ENCODE measurements at regions of chr19 and their contacts with region 1.

Region 1: GRCh38 chr19:33373701-33374421 is at the start of gene CEBPG:
- DNase-seq: peak in 2 of 3 donors; percentile 46 to 49
- H3K4me3 ChIP-seq: peak within 1 kb of the TSS; percentile 73 to 96 (median 80)
- H3K4me3 Mint-ChIP-seq: peak within 1 kb of the TSS; percentile 85 to 96
- H3K27ac ChIP-seq: peak within 1 kb of the TSS; percentile 90 to 94
- H3K27ac Mint-ChIP-seq: peak within 1 kb of the TSS; percentile 89 to 98 (median 94)
- H3K4me1 ChIP-seq: peaks cover 51 to 59% of the 10 kb centered on the region in 2 donors
- H3K4me1 Mint-ChIP-seq: peaks cover 63% of the 10 kb centered on the region
- H3K27me3 ChIP-seq: no peaks in the 10 kb centered on the region
- H3K27me3 Mint-ChIP-seq: no peaks in the 10 kb centered on the region
- CTCF ChIP-seq: no peak
- polyA plus RNA-seq, gene CEBPG: 16.8 to 18.3 (median 17.8) TPM

Region 2: DNA sequence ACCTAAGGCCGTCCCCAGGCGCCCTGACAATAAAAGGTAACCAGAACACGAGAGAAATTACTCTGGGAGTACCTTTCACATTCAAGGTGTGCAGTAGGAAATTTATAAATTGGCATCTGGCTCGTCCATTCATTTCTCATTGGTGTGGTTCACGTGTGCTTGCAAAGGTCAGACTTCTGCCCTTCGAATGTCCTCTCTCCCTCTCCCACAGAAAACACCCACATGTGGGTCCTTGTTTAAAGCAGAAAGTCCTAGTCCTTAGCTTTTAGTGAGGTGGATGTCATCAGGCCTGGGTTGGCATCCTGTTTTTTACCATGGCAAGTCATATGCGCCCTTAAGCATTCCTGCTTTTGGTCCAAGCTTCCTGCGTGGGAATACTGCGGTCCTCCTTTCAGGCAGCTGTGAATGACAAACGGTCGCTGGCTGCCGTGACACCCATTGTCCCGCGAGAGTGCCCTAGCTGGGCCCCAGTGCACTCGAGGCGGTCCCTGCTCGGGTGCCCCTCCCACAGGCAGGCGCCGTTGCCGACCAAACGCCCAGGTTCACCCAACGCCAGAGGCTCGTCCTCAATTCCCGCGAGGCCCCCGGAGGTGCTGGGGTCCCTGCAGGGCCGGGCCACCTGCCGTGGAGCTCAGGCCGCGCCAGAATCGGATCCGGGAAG is 682.4 kb before region 1 on chr19 and contains the start of gene NUDT19:
- intact Hi-C with region 1: loop called in 1 of 2 experiments (anchors 10 kb)
- DNase-seq: peak; percentile 54 to 65 (median 56)
- H3K4me3 ChIP-seq: peak within 1 kb of the TSS; percentile 57 to 82 (median 71)
- H3K4me3 Mint-ChIP-seq: peak within 1 kb of the TSS; percentile 84 to 95
- H3K27ac ChIP-seq: peak within 1 kb of the TSS; percentile 74 to 75
- H3K27ac Mint-ChIP-seq: peak within 1 kb of the TSS; percentile 82 to 93 (median 87)
- H3K4me1 ChIP-seq: peaks cover 54 to 59% of the 10 kb centered on the region in 2 donors
- H3K4me1 Mint-ChIP-seq: peaks cover 58% of the 10 kb centered on the region
- H3K27me3 ChIP-seq: no peaks in the 10 kb centered on the region
- H3K27me3 Mint-ChIP-seq: peaks cover 0 to 1% (median 0%) of the 10 kb centered on the region in 3 donors
- CTCF ChIP-seq: no peak
- polyA plus RNA-seq, gene NUDT19: 3.8 to 5.6 (median 4.6) TPM

Region 3: DNA sequence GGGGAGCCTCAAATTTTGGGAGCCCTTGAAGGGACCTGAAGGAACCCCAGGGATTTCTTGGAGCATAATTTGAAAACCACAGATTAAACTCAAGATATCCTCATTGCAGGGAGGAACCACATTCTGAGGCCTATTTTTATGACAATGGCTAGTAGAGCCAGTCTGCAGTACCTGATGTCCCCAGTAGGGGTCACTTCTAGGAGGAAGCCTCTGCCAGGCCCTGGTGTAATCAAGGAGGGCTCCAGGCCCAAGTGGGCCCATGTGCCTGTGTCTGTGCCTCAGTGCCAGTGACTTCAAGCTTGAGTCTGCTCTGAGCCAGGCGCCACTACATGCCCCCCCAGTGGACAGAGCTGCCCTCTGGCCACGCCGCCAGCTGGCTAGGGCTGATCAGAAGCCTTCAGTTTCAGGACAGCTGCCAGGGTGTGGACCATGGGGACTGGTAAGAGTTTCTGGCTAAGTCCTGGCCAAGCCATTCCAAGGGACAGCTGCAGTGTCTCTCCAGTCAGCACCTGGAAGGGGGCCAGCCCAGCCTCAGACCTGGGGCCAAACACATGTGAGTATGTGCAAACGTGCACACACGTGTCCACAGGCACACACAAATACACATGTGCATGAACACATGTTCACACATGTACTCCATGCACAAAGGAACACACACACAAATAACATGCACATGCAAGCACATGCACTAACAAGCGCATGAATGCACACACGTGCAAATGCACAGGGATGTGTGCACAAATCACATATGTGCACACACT is 127.7 kb before region 1 on chr19:
- intact Hi-C with region 1: loop called in 1 of 2 experiments (anchors 5 kb)
- DNase-seq: peak in 2 of 3 donors; percentile 45 to 52
- H3K4me3 ChIP-seq: no peak overlapping the region
- H3K4me3 Mint-ChIP-seq: no peak overlapping the region
- H3K27ac ChIP-seq: no peak overlapping the region
- H3K27ac Mint-ChIP-seq: no peak overlapping the region
- H3K4me1 ChIP-seq: peaks cover 34 to 45% of the 10 kb centered on the region in 2 donors
- H3K4me1 Mint-ChIP-seq: peaks cover 29% of the 10 kb centered on the region
- H3K27me3 ChIP-seq: no peaks in the 10 kb centered on the region
- H3K27me3 Mint-ChIP-seq: peaks cover 1 to 8% (median 2%) of the 10 kb centered on the region in 3 donors
- CTCF ChIP-seq: peak; percentile 63

Region 4: DNA sequence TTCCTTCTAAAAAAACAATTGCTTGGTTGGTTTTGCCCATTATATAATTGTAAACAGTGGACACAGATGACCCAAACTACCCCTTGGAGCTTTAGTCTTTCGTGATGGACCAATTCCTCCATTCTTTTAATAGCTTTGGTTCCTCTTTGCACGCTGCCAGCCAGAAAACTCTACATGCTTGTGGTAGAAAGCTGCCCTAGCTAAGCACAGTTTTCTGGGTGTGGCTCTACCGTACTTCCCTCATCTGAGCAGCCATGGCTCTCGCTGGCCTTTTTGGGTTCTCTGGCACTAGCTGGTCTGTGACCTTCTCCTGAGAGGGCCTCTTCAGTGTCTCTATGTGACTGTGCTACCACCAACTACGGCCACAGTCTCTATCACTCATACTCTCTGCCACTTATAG is 41.6 kb before region 1 on chr19:
- intact Hi-C with region 1: loop called in 1 of 2 experiments (anchors 5 kb)
- DNase-seq: peak; percentile 77 to 87 (median 82)
- H3K4me3 ChIP-seq: peak overlapping the region in 1 of 3 experiments; percentile 51
- H3K4me3 Mint-ChIP-seq: peak overlapping the region in 1 of 2 donors; percentile 74
- H3K27ac ChIP-seq: peak overlapping the region; percentile 73 to 82
- H3K27ac Mint-ChIP-seq: peak overlapping the region; percentile 80 to 94 (median 93)
- H3K4me1 ChIP-seq: peaks cover 63 to 64% of the 10 kb centered on the region in 2 donors
- H3K4me1 Mint-ChIP-seq: peaks cover 56% of the 10 kb centered on the region
- H3K27me3 ChIP-seq: no peaks in the 10 kb centered on the region
- H3K27me3 Mint-ChIP-seq: peaks cover 0 to 4% (median 0%) of the 10 kb centered on the region in 3 donors
- CTCF ChIP-seq: no peak

Region 5: GRCh38 chr19:33358408-33358807 is 15.5 kb before region 1 on chr19:
- intact Hi-C with region 1: no loop called
- DNase-seq: no peak
- H3K4me3 ChIP-seq: no peak overlapping the region
- H3K4me3 Mint-ChIP-seq: no peak overlapping the region
- H3K27ac ChIP-seq: no peak overlapping the region
- H3K27ac Mint-ChIP-seq: no peak overlapping the region
- H3K4me1 ChIP-seq: no peaks in the 10 kb centered on the region
- H3K4me1 Mint-ChIP-seq: no peaks in the 10 kb centered on the region
- H3K27me3 ChIP-seq: no peaks in the 10 kb centered on the region
- H3K27me3 Mint-ChIP-seq: peaks cover 0 to 5% (median 4%) of the 10 kb centered on the region in 3 donors
- CTCF ChIP-seq: no peak

Measured in CD14-positive monocyte (primary cell).